A673 (cell line): ENCODE measurements at regions of chr6 and their contacts with region 1.

Region 1: GRCh38 chr6:111709615-111710398 is 104.1 kb upstream of the TRAF3IP2 start:
- DNase-seq: peak; percentile 84
- H3K4me3 ChIP-seq: no peak overlapping the region
- H3K27ac ChIP-seq: no peak overlapping the region
- H3K4me1 ChIP-seq: no peaks in the 10 kb centered on the region
- H3K27me3 ChIP-seq: no peaks in the 10 kb centered on the region
- CTCF ChIP-seq: peak; percentile 76

Region 2: DNA sequence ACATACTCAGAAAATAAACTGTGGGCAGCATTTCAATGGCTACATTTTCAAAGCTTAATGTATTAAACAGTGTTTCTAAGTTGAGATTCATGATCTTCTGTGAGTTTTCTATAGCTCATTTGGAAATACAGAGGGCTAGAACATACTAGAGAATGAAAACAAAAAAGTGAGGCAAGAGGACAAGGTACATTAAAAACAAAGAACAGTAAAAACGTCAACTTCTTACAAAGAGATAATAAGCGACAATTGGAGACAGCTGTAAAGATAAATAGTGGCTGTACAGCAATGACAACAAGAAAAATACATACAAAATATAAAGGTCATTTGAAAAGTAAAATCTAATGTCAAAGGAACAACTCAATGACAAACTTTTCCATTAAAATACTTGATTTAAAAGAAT is 321.1 kb before region 1 on chr6:
- CTCF ChIA-PET with region 1: no interaction called
- POLR2A ChIA-PET with region 1: no interaction called
- intact Hi-C with region 1: no loop called
- DNase-seq: no peak
- H3K4me3 ChIP-seq: no peak overlapping the region
- H3K27ac ChIP-seq: no peak overlapping the region
- H3K4me1 ChIP-seq: no peaks in the 10 kb centered on the region
- H3K27me3 ChIP-seq: no peaks in the 10 kb centered on the region
- CTCF ChIP-seq: no peak

Region 3: DNA sequence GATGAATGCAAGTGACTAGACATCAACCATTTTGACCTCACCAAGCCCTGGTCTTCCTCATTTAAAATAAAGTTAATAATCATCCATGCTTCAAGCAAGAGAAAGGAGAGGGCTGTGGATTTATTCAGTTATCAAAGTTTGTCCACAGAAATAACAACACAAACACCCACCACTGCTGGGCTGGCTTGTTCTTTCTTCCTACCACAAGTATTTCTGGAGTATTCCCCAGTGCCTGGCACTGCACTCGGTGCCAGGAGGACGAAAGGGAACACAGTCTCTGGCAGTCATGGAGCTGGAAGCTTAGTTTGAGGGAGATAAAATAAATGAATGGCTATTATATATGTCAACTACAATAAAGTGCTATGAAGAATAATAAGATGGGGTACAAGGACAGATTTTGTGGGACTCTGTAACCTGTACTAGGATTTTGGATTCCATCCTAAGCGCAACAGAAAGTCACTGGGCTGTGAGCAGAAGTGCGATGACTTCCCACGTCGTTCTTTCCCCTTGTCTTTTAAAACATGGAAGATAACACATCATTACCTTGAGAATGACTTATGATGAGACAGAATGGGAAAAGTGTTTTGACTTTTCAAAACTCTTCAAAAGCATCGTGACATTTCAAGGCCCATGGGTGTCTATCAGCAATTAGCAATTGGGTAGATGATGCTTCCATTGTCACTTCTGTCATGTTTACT is 29.6 kb before region 1 on chr6:
- CTCF ChIA-PET with region 1: no interaction called
- POLR2A ChIA-PET with region 1: no interaction called
- intact Hi-C with region 1: no loop called
- DNase-seq: no peak
- H3K4me3 ChIP-seq: no peak overlapping the region
- H3K27ac ChIP-seq: no peak overlapping the region
- H3K4me1 ChIP-seq: no peaks in the 10 kb centered on the region
- H3K27me3 ChIP-seq: no peaks in the 10 kb centered on the region
- CTCF ChIP-seq: no peak

Region 4: DNA sequence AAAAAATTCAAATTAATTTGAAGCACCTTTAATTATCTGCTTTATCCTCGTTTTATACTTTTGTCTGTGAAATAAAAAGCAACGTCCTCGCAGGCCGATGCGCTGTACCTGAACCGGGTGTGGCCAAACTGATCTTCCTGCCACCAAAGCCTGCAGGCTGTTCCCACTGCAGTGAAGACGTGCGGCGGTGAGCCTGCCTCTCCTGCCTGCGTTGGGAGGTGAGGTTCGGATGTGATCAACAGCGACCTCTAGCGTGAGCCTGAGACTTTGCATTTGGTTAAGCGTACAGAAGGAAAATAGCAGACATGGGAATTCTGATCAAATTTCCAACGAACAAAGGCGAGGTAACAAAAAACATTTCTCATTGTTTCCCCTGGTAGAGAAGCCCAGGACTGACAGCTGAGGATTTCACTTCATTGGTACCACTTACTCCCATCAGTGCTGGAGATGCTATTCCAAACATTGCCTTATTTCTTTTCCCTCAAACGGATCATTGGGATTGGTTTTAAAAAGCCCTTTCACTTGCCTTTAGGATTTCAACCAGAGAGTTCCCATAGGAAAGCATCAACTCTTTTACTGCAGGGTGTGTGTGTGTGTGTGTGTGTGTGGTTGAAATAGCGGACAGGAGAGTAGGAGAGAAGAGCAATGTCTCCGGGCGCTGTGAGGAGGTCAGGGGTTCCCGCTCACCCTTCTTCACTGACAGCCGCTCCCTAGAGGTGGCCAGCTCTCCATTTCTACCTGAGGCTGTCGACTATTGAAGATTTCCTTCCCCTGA is 287.5 kb after region 1 on chr6:
- CTCF ChIA-PET with region 1: no interaction called
- POLR2A ChIA-PET with region 1: no interaction called
- intact Hi-C with region 1: loop called (anchors 2 kb)
- DNase-seq: peak; percentile 83
- H3K4me3 ChIP-seq: no peak overlapping the region
- H3K27ac ChIP-seq: no peak overlapping the region
- H3K4me1 ChIP-seq: peaks cover 9% of the 10 kb centered on the region
- H3K27me3 ChIP-seq: no peaks in the 10 kb centered on the region
- CTCF ChIP-seq: peak; percentile 91

Region 5: GRCh38 chr6:112029045-112029822 is 319.4 kb after region 1 on chr6:
- CTCF ChIA-PET with region 1: interaction called, 5 read pairs
- POLR2A ChIA-PET with region 1: no interaction called
- intact Hi-C with region 1: loop called (anchors 5 kb)
- DNase-seq: peak; percentile 78
- H3K4me3 ChIP-seq: no peak overlapping the region
- H3K27ac ChIP-seq: no peak overlapping the region
- H3K4me1 ChIP-seq: peaks cover 12% of the 10 kb centered on the region
- H3K27me3 ChIP-seq: peaks cover 24% of the 10 kb centered on the region
- CTCF ChIP-seq: peak; percentile 91

Region 6: DNA sequence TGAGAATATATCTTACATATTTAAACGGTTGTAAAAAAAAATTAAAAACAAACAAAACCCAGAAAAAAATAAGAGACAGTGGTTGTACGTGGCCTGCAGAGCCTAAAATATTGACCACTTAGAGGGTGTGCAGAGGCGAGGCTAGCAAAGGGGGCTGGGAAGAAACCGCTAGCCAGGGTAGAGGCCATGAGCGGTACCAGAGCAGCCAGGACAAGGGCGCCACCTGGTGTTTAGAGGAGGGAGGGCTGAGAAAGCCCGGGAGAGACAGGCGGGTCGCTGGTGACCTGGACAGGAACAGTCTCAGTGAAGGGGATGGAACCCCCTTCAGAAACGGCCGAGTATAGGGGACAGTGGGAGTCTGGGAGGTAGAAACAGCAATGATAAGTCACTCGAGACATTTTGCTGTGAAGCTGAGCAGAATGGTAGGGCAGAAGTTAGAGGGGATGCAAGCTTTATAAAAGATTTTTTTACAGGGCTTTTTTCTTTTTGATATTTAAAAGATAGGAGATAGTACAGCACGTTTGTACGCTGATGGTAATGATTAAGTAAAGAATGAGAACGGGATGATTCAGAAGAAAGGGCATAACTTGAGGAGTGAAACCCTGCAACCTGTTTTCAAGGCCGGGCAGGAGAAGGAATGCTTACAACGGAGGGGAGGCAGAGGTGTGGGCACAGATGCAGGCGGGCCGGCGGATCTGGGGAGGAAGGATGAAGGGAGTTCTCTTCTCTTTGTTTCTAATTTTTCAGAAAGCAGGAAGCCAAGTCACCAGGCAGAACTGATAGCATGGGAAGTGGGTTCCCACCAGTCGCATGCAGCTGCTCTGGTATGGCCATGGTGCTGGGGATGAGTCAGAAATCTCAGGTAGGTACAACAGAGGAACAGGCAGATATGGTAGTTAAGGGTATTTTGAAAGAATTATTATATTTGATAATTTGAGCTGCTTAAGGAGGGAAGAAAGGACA is 453.8 kb after region 1 on chr6:
- CTCF ChIA-PET with region 1: no interaction called
- POLR2A ChIA-PET with region 1: no interaction called
- intact Hi-C with region 1: loop called (anchors 5 kb)
- DNase-seq: peak; percentile 69
- H3K4me3 ChIP-seq: no peak overlapping the region
- H3K27ac ChIP-seq: no peak overlapping the region
- H3K4me1 ChIP-seq: no peaks in the 10 kb centered on the region
- H3K27me3 ChIP-seq: peaks cover 23% of the 10 kb centered on the region
- CTCF ChIP-seq: peak; percentile 95

Region 7: DNA sequence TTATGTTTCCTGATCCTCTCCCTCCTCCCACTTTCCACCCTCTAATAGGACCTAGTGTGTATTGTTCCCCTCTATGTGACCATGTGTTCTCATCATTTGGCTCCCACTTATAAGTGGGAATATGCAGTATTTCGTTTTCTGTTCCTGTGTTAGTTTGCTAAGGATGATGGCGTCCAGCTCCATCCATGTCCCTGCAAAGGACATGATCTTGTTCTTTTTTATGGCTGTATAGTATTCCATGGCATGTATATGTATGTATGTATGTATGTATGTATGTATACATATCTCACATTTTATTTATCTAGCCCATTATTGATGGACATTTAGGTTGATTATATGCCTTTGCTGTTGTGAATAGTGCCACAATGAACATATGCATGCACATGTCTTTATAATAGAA is 826.0 kb after region 1 on chr6:
- CTCF ChIA-PET with region 1: no interaction called
- POLR2A ChIA-PET with region 1: no interaction called
- intact Hi-C with region 1: no loop called
- DNase-seq: no peak
- H3K4me3 ChIP-seq: no peak overlapping the region
- H3K27ac ChIP-seq: no peak overlapping the region
- H3K4me1 ChIP-seq: no peaks in the 10 kb centered on the region
- H3K27me3 ChIP-seq: no peaks in the 10 kb centered on the region
- CTCF ChIP-seq: no peak